Activated CD8-positive, alpha-beta memory T cell treated with anti-CD3 and anti-CD28 coated beads, Interleukin-2, amount 10 ng/mL, durations not matched to agents 7 days and 5 days (primary cell): ENCODE measurements at regions of chr2 and their contacts with region 1.

Region 1: DNA sequence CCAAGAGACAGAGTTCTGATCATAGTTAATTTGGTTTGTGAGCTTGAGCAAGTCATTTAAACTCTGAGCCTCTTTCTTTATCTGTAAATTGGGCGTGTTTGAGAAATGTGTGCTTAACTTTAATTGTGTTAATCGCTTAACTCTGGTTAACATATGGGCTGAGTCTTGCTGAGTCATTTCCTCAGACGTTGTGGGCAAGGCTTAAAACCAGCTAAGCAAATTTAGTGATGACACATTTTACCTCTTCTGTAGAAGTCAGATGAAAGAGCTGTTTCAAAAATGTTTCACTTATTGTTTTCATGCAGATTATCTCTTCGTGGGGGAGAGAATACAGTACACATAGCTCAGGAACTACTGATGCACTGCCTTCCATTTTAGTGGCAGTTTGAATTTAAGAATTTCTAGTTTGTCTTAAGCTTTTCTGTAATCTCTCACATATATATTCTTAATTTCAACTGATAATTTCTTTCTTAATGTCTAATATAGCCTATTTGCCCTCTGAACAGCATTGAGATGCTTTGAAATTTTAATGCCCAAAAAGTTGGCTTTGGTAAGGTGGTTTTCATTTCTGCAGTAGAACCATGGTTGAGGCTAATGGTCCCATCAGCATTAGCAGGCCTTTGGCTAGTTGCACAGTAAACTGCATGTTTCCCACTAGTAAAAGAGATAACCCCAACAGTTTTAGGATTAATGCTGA is 34.9 kb downstream of the RAB10 start:
- DNase-seq: peak; percentile 85
- ATAC-seq: peak; percentile 90
- H3K4me3 Mint-ChIP-seq: peak overlapping the region; percentile 71
- H3K27ac Mint-ChIP-seq: peak overlapping the region; percentile 95
- H3K4me1 Mint-ChIP-seq: peaks cover 66% of the 10 kb centered on the region
- H3K27me3 Mint-ChIP-seq: no peaks in the 10 kb centered on the region

Region 2: DNA sequence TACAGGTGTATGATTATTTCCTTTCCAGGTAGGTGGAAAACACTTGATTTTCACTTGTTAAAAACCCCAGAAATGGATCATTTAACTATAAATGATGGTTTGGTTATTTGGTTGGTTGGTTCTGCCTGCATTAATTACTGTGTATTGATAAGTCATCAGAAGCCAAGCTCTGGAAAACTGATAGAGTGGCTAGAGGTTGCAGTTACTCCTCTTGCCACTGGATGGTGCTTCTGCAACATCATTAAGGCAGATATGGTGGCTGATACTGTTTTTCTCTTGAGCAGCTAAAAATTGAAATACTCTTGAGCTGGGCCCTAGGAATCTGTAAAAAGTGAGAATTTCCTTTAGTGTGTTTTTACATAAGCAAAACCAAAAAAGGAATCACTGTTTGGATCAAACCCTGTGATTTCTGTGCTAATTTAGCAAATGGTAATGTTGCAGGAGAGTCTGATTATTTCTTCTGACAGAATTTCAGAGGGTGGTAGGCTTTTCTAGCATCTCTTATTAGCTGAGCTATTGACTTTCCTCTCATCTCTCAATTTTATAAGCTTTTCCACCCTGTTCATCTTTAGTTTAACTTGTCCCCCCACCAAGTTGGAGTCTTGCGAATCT is 19.4 kb after region 1 on chr2:
- CTCF ChIA-PET with region 1: interaction called, 10 read pairs
- DNase-seq: no peak
- ATAC-seq: peak; percentile 55
- H3K4me3 Mint-ChIP-seq: no peak overlapping the region
- H3K27ac Mint-ChIP-seq: no peak overlapping the region
- H3K4me1 Mint-ChIP-seq: peaks cover 47% of the 10 kb centered on the region
- H3K27me3 Mint-ChIP-seq: no peaks in the 10 kb centered on the region